Dendritic cell treated with granulocyte-macrophage colony-stimulating factor and Interleukin-4, amounts not matched to agents 40 ng/mL and 50 ng/mL, for 4 days (primary cell): ENCODE measurements at regions of chr10 and their contacts with region 1.

Region 1: DNA sequence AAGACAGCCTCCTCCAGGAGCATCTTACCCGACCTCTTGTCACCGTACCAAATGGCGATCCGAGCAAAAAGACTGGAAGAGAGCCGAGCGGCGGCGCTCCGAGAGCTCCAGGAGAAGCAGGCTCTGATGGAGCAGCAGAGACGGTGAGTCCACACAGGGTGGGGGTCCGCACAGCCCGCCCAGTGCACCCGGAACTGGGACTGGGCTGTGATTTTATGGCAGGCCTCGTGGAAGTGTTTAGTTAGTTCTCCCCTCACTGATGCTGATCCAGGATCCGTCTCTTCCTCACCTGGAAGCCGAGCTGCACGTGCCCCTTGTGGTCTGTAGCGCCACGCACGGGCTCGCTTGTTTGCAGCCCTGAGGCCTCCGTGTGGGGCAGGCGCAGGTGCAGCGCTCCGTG is 19.6 kb downstream of the LRRC27 start:
- H3K4me3 Mint-ChIP-seq: no peak overlapping the region
- H3K27ac Mint-ChIP-seq: no peak overlapping the region
- H3K4me1 Mint-ChIP-seq: peaks cover 28% of the 10 kb centered on the region
- H3K27me3 Mint-ChIP-seq: no peaks in the 10 kb centered on the region

Region 2: GRCh38 chr10:132223156-132223590 is 128.4 kb before region 1 on chr10:
- intact Hi-C with region 1: loop called (anchors 1 kb)
- H3K4me3 Mint-ChIP-seq: peak overlapping the region; percentile 52
- H3K27ac Mint-ChIP-seq: peak overlapping the region; percentile 82
- H3K4me1 Mint-ChIP-seq: peaks cover 6% of the 10 kb centered on the region
- H3K27me3 Mint-ChIP-seq: no peaks in the 10 kb centered on the region

Region 3: GRCh38 chr10:133347710-133348517 is 996.3 kb after region 1 on chr10:
- intact Hi-C with region 1: no loop called
- H3K4me3 Mint-ChIP-seq: no peak overlapping the region
- H3K27ac Mint-ChIP-seq: no peak overlapping the region
- H3K4me1 Mint-ChIP-seq: peaks cover 6% of the 10 kb centered on the region
- H3K27me3 Mint-ChIP-seq: peaks cover 54% of the 10 kb centered on the region